Natural killer cell (primary cell): ENCODE measurements at regions of chr16 and their contacts with region 1.

Region 1: DNA sequence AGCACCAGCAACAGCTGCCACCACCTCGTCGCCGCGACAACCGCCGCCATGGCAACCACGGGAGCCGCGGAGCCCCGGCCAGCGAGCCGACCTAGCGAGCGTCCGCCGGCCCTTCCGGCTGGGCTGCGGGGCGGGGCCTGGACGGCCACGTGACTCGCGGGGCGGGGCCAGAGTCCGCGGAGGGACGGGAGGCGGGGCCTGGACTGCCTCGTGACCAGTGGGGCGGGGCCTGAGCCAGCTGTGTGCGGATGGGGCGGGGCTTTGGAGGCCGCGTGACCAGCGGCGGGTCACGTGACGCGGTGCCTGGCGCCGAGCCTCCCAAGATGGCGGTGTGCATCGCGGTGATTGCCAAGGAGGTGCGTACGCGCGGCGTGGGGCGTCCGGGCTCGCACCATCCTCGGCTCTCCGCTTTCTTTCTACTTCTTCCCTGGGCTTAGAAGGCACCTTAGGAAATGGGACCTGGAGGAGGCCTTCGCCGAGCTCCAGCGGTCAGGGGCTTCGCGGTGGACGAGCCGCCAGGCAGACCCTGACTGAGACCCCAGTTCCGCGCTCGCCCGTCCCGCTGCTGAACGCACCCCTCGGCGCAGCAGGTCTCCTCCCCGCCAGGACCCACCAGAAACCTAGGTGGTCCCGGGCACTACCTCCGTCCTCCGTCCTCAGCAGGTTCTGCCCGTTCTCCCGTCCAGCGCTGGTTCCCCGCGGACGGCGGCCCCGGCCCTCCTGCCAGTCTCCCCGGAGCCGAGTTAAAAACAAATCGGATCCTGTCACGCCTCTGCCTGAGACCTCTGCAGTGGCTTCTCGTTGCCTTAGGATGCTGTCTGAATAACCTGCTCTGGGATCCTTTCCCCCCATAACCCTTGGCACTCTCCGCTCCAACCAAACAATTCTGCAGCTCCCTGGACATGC is at the starts of genes GALNS and TRAPPC2L:
- DNase-seq: peak; percentile 99 to 100
- ATAC-seq: peak; percentile 90 to 98 (median 92)
- H3K4me3 ChIP-seq: peak within 1 kb of the TSS; percentile 97
- H3K4me3 Mint-ChIP-seq: peak within 1 kb of the TSS; percentile 97
- H3K27ac ChIP-seq: peak within 1 kb of the TSS; percentile 68
- H3K27ac Mint-ChIP-seq: peak within 1 kb of the TSS; percentile 91 to 93
- H3K4me1 ChIP-seq: peaks cover 43% of the 10 kb centered on the region
- H3K4me1 Mint-ChIP-seq: peaks cover 23 to 33% of the 10 kb centered on the region in 2 donors
- H3K27me3 ChIP-seq: no peaks in the 10 kb centered on the region
- H3K27me3 Mint-ChIP-seq: no peaks in the 10 kb centered on the region
- CTCF ChIP-seq: no peak
- total RNA-seq, gene GALNS: 58.1 to 75.8 (median 65.7) TPM
- total RNA-seq, gene TRAPPC2L: 31.9 to 39.0 (median 36.2) TPM

Region 2: GRCh38 chr16:88561485-88562369 is 295.4 kb before region 1 on chr16:
- intact Hi-C with region 1: loop called (anchors 2 kb)
- DNase-seq: peak; percentile 43 to 78
- ATAC-seq: peak; percentile 76 to 89 (median 87)
- H3K4me3 ChIP-seq: no peak overlapping the region
- H3K4me3 Mint-ChIP-seq: no peak overlapping the region
- H3K27ac ChIP-seq: no peak overlapping the region
- H3K27ac Mint-ChIP-seq: no peak overlapping the region
- H3K4me1 ChIP-seq: peaks cover 20% of the 10 kb centered on the region
- H3K4me1 Mint-ChIP-seq: peaks cover 5 to 19% of the 10 kb centered on the region in 2 donors
- H3K27me3 ChIP-seq: no peaks in the 10 kb centered on the region
- H3K27me3 Mint-ChIP-seq: no peaks in the 10 kb centered on the region
- CTCF ChIP-seq: peak; percentile 60

Region 3: DNA sequence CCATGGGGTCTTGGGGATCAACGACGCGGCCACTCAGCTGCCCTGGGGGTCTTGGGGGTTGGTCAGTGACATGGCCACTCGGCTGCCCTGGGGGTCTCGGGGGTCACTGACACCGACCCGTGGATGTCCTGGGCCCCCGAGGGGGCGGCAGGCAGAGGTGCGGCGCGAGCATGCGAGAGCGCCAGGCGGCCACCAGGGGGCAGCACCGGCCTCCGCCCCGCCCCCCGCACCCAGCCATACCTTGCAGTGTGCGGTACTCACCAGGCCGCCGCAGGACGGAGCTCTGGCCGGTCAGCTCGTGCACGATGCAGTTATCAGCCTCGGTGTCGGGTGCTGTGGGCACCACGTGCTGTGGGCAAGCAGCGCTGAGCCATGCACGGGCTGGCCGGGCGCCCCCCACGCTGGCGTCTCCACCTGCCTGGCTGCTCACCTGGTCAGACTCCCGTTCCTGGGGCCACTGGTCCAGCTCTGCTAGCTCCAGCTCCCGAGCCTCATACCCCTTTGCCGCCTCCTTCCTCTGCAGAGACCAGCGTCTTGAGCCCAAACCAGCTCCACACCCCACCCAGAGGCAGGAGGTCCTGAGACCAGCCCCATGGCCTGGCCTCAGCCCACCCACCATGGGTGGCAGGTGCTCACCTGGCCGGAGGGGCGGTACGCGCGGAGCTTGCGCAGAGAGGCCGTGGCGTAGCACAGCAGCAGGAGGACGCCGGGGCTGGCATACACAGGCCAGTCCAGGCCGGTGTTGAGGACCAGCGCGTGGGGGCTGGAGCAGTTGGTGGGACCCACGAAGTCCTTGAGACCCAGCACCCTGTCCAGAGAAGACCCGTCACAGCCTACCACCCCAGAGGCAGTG is 119.6 kb before region 1 on chr16:
- intact Hi-C with region 1: loop called (anchors 5 kb)
- DNase-seq: peak; percentile 75 to 85
- ATAC-seq: peak; percentile 85 to 99 (median 90)
- H3K4me3 ChIP-seq: no peak overlapping the region
- H3K4me3 Mint-ChIP-seq: no peak overlapping the region
- H3K27ac ChIP-seq: no peak overlapping the region
- H3K27ac Mint-ChIP-seq: no peak overlapping the region
- H3K4me1 ChIP-seq: peaks cover 12% of the 10 kb centered on the region
- H3K4me1 Mint-ChIP-seq: peaks cover 0 to 5% of the 10 kb centered on the region in 2 donors
- H3K27me3 ChIP-seq: no peaks in the 10 kb centered on the region
- H3K27me3 Mint-ChIP-seq: no peaks in the 10 kb centered on the region
- CTCF ChIP-seq: peak; percentile 98

Region 4: GRCh38 chr16:88811769-88812512 is 45.1 kb before region 1 on chr16 and contains the start of gene APRT:
- intact Hi-C with region 1: loop called (anchors 2 kb)
- DNase-seq: peak; percentile 98 to 99
- ATAC-seq: peak; percentile 93 to 97 (median 93)
- H3K4me3 ChIP-seq: peak within 1 kb of the TSS; percentile 81
- H3K4me3 Mint-ChIP-seq: peak within 1 kb of the TSS; percentile 94
- H3K27ac ChIP-seq: peak within 1 kb of the TSS; percentile 67
- H3K27ac Mint-ChIP-seq: peak within 1 kb of the TSS; percentile 82 to 96
- H3K4me1 ChIP-seq: peaks cover 24% of the 10 kb centered on the region
- H3K4me1 Mint-ChIP-seq: peaks cover 7 to 24% of the 10 kb centered on the region in 2 donors
- H3K27me3 ChIP-seq: no peaks in the 10 kb centered on the region
- H3K27me3 Mint-ChIP-seq: no peaks in the 10 kb centered on the region
- CTCF ChIP-seq: no peak
- total RNA-seq, gene APRT: 118 to 123 (median 120) TPM